ENCODE measurements at regions of chr10 and their contacts with region 1.

Region 1: GRCh38 chr10:104353325-104354048 is at the start of gene CFAP58:
- DNase-seq: peak; percentile 82 to 97 (median 91)

Region 2: DNA sequence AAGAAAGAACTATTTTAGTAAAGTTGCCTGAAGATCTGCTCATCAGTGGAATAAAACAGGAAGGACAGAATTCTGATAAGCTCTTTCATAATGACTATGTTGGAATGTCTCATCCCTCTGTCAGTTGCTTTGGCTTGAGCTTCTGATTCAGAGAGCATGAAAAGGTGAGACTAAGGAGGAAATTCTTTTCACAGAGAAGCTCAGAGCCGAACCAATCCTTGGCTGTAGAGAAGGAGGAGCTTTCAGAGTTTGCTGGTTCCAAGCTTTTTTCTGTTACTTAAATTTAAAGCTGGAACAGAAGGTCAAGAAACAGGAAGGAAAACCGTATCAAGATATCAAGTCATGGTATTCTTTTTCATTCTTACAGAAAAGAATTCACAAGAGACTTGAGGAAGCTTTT is 60.5 kb before region 1 on chr10:
- intact Hi-C with region 1: loop called (anchors 1 kb)
- DNase-seq: peak in 2 of 42 donors; percentile 37 to 42

Region 3: DNA sequence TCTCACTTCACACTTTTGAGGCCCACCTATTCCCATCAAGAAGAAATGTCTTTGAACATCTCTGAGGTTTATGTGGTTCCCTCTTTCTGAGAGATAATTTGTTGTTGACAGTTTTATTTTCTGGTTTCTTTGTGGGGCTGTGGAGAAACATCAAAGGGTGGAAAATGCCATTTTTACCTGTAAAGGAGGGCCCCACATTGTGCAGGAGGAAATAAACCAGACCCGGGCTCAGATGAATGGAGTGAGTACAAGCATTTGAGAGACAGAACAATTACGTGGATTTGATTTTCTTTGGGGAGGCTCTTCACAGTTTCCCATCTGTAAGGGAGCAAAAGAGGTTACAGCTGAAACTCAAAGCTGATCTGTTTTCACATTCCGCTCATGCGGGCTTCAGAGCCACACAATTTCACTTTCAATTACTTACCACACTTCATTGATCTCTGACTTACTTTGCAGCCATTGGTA is 45.0 kb before region 1 on chr10:
- intact Hi-C with region 1: loop called (anchors 5 kb)
- DNase-seq: no peak

Region 4: DNA sequence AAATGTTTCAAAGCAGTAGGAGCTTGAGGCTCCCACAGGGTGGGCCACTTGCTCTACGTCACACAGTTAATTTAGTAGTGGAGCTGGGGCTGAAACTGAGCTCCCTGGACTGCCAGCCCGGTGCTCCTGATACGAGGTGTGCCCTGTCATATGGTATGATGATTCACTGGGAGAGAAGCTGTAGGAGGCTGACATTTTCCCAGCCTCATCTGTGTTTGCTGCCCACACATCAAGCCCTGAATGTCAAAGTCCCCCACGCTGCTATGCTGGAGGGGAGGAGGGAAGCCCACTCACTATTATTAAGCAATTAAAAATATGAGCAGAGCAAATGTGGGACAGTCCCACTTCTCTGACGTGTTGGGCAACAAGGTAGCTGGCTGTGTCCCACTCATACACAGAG is 206.4 kb after region 1 on chr10:
- intact Hi-C with region 1: no loop called
- DNase-seq: peak; percentile 17 to 91 (median 64)

Measured in head of caudate nucleus (tissue), 42 donors.